Activated CD4-positive, alpha-beta T cell treated with anti-CD3 and anti-CD28 coated beads for 36 hours (primary cell): ENCODE measurements at regions of chr12 and their contacts with region 1.

Region 1: DNA sequence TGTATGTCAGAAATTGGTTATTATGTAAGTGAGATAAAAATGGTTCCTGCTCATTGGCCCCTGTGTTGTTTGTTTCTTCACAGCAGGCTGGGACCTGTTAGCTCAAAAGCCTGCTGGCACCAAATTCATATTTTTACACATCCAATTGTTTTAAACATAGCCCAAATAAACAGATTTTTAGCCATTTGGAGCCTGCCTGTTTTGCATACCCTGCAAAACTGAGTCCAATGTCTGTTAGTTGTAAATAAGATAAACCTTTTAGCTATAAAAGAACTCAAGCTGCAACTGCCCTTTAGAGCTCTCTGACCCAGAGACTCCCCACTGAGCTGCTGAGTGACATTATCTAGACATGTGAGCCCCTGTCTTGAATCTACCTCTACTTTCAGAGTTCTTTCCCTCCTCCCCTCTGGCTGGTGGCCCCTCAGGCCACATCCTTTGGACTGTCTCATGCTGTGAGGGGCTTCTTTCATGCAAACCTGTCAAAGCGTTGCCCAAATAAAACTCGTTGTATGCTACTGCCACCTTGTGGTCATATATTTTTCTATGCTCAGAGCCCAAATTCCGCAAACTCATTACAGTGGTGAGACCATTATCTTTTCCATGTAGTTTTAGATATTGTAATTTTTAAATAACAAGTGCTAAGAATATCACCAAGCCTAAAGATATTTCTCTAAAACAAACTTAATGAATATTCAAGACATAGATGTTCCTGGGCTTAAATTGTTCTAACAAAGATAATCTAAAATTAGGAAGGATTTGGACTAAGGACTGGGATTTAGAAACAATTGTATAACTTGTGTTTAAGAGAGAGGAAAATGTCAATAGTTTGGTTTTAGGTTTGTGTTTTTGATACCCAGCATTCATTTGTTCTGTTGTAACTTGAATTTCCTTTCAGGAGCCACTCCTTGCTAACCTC is 337.9 kb downstream of the AACS start:
- DNase-seq: no peak
- ATAC-seq: no peak
- H3K4me3 Mint-ChIP-seq: no peak overlapping the region
- H3K27ac Mint-ChIP-seq: no peak overlapping the region
- H3K4me1 Mint-ChIP-seq: no peaks in the 10 kb centered on the region
- H3K27me3 Mint-ChIP-seq: peaks cover 12% of the 10 kb centered on the region

Region 2: GRCh38 chr12:125240717-125241116 is 162.4 kb before region 1 on chr12:
- CTCF ChIA-PET with region 1: interaction called, 7 read pairs
- POLR2A ChIA-PET with region 1: no interaction called
- intact Hi-C with region 1: loop called (anchors 1 kb)
- DNase-seq: no peak
- ATAC-seq: no peak
- H3K4me3 Mint-ChIP-seq: no peak overlapping the region
- H3K27ac Mint-ChIP-seq: no peak overlapping the region
- H3K4me1 Mint-ChIP-seq: no peaks in the 10 kb centered on the region
- H3K27me3 Mint-ChIP-seq: peaks cover 19% of the 10 kb centered on the region

Region 3: DNA sequence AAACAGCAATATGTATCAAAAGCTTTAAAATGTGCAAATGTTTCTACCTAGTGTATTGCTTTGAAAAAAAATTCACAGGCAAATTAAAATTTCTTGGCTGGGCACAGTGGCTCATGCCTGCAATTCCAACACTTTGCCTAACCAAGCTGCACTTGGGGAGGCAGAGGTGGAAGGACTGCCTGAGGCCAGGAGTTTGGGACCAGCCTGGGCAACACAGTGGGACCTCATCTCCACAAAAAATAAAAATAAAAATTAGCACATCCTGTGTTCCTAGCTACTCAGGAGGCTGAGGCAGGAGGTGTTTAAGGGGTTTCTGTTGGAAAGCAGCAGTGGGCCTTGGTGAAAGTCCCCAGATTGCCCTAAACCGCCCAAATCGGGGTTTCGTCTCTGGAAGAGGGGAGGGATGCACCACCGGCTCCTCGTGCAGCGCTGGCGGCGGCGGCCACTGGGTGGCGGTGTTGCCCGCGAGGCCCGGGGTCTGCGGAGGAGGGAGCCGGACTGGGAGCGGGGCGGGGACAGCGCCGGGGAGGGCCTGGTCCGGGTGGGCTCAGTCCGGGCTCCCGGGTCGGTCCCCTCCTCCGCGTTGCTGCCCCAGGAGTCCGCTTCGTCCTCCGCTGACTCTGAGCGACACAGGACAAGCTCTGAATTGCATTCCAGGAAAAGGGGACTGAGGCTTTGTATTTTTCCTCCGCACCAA is 72.3 kb before region 1 on chr12:
- CTCF ChIA-PET with region 1: interaction called, 11 read pairs
- POLR2A ChIA-PET with region 1: no interaction called
- intact Hi-C with region 1: loop called (anchors 1 kb)
- DNase-seq: peak; percentile 77
- ATAC-seq: peak; percentile 69
- H3K4me3 Mint-ChIP-seq: no peak overlapping the region
- H3K27ac Mint-ChIP-seq: no peak overlapping the region
- H3K4me1 Mint-ChIP-seq: no peaks in the 10 kb centered on the region
- H3K27me3 Mint-ChIP-seq: peaks cover 29% of the 10 kb centered on the region

Region 4: GRCh38 chr12:125346362-125346761 is 56.8 kb before region 1 on chr12:
- CTCF ChIA-PET with region 1: no interaction called
- POLR2A ChIA-PET with region 1: no interaction called
- intact Hi-C with region 1: loop called in 1 of 2 experiments (anchors 5 kb)
- DNase-seq: no peak
- ATAC-seq: no peak
- H3K4me3 Mint-ChIP-seq: no peak overlapping the region
- H3K27ac Mint-ChIP-seq: no peak overlapping the region
- H3K4me1 Mint-ChIP-seq: no peaks in the 10 kb centered on the region
- H3K27me3 Mint-ChIP-seq: peaks cover 19% of the 10 kb centered on the region

Region 5: DNA sequence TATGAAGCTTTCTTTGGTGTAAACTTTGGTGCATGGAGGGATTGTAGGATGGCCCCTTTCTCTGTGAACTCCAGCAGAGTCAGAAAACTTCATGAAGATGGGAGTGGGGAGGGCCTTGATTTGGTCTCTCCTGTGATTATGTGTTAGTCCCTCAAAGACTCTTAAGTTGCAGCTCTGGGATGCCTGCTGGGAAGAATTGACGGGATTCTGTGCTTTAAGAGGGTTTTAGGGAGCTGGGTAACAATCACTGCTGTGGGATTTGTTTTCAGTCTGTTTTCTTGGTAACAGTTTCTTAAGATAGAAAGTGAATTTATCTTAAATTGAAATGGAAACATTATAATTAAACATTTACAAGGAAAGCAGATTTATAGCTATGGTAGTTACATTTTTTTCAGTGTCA is 40.2 kb after region 1 on chr12:
- CTCF ChIA-PET with region 1: no interaction called
- POLR2A ChIA-PET with region 1: no interaction called
- intact Hi-C with region 1: no loop called
- DNase-seq: no peak
- ATAC-seq: no peak
- H3K4me3 Mint-ChIP-seq: no peak overlapping the region
- H3K27ac Mint-ChIP-seq: no peak overlapping the region
- H3K4me1 Mint-ChIP-seq: no peaks in the 10 kb centered on the region
- H3K27me3 Mint-ChIP-seq: peaks cover 2% of the 10 kb centered on the region